Lower lobe of right lung (tissue), 2 donors: ENCODE measurements at regions of chr2 and their contacts with region 1.

Region 1: DNA sequence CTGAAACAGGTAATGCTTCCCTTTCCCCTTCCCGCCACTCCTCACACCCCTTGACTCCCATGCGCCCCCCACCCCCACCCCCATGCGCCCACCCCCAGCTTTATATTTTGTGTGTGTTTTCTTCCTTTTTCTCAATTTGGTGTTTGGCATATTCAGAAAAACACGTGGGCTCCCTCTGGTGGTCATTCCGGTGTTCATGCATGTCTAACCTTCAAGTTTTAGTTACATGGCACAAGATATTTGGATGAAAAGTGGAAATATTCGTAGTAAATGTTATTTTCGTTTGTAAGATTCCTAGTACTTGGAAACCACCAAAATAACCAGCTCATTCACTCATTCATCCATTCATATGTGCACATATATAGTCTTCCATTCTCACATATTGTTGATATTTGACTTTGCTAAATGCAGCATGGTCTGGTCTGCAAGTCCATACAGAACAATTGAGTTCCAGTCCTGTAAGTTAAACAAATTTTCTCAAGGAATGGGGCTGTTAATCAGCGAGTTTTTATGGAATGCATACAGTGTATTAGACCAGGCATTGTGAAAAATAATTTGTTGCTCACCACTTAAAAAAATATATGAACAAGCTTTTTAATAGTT is 143.6 kb upstream of the MAP3K20 start:
- DNase-seq: peak; percentile 54
- ATAC-seq: peak; percentile 52 to 54
- H3K4me3 ChIP-seq: peak overlapping the region; percentile 24
- H3K27ac ChIP-seq: peak overlapping the region; percentile 34
- H3K4me1 ChIP-seq: peaks cover 21% of the 10 kb centered on the region
- H3K27me3 ChIP-seq: no peaks in the 10 kb centered on the region
- CTCF ChIP-seq: peak; percentile 68

Region 2: DNA sequence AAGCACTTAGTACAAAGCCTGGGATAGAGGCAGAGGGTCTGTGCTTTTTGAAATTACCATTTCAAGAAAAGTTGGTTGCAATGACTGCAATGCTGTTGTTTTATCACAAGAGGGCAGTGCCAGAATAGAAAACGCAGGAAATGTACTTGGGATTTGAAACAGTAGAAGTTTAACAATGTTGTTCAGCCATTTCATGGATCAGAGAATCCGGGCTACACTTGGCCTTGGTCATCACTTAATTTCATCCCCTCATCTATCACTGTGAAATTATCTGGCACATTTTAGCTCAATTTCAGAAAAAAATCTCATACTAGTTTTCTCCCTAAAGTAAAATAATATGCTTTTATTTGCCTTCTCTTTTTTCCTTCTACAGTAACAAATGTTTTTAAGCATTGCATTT is 125.5 kb before region 1 on chr2:
- intact Hi-C with region 1: loop called (anchors 5 kb)
- DNase-seq: no peak
- ATAC-seq: no peak
- H3K4me3 ChIP-seq: no peak overlapping the region
- H3K27ac ChIP-seq: no peak overlapping the region
- H3K4me1 ChIP-seq: no peaks in the 10 kb centered on the region
- H3K27me3 ChIP-seq: no peaks in the 10 kb centered on the region
- CTCF ChIP-seq: peak; percentile 80

Region 3: DNA sequence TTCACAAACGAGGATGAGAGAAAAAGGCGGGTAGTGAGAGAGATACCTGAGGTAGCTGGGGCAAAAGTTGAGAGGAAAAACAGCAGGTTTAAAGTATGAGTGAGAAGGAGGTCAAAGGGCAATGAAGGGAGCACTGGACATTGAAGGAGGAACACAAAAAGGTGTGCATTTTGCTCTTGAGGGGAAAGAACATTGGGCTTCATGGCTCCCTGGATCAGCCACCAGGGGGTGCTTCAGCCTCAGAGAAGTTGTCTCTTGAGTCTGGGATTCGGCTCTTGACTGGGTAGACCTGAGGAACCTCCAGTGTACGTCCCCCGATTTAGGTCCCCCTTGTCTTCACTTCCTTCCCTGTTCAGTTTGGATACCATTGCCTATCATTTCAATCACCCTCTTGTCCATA is 67.8 kb before region 1 on chr2:
- intact Hi-C with region 1: loop called (anchors 5 kb)
- DNase-seq: peak; percentile 60
- ATAC-seq: peak; percentile 71 to 90
- H3K4me3 ChIP-seq: no peak overlapping the region
- H3K27ac ChIP-seq: no peak overlapping the region
- H3K4me1 ChIP-seq: peaks cover 7% of the 10 kb centered on the region
- H3K27me3 ChIP-seq: no peaks in the 10 kb centered on the region
- CTCF ChIP-seq: peak; percentile 74

Region 4: GRCh38 chr2:173249661-173250641 is 317.9 kb after region 1 on chr2:
- intact Hi-C with region 1: no loop called
- DNase-seq: no peak
- ATAC-seq: no peak
- H3K4me3 ChIP-seq: no peak overlapping the region
- H3K27ac ChIP-seq: no peak overlapping the region
- H3K4me1 ChIP-seq: no peaks in the 10 kb centered on the region
- H3K27me3 ChIP-seq: no peaks in the 10 kb centered on the region
- CTCF ChIP-seq: no peak